ENCODE measurements at regions of chr7 and their contacts with region 1.

Region 1: GRCh38 chr7:36366718-36367560 is 22.7 kb upstream of the ANLN start:
- DNase-seq: peak; percentile 89 to 94 (median 91)
- H3K4me3 ChIP-seq: peak overlapping the region; percentile 90
- H3K4me3 Mint-ChIP-seq: peak overlapping the region; percentile 91 to 97 (median 94)
- H3K27ac ChIP-seq: peak overlapping the region; percentile 77
- H3K27ac Mint-ChIP-seq: peak overlapping the region in 7 of 8 donors; percentile 84 to 93 (median 88)
- H3K4me1 ChIP-seq: peaks cover 6% of the 10 kb centered on the region
- H3K4me1 Mint-ChIP-seq: peaks cover 0 to 8% (median 6%) of the 10 kb centered on the region in 3 donors
- H3K27me3 ChIP-seq: no peaks in the 10 kb centered on the region
- H3K27me3 Mint-ChIP-seq: peaks cover 13 to 19% of the 10 kb centered on the region in 2 donors

Region 2: DNA sequence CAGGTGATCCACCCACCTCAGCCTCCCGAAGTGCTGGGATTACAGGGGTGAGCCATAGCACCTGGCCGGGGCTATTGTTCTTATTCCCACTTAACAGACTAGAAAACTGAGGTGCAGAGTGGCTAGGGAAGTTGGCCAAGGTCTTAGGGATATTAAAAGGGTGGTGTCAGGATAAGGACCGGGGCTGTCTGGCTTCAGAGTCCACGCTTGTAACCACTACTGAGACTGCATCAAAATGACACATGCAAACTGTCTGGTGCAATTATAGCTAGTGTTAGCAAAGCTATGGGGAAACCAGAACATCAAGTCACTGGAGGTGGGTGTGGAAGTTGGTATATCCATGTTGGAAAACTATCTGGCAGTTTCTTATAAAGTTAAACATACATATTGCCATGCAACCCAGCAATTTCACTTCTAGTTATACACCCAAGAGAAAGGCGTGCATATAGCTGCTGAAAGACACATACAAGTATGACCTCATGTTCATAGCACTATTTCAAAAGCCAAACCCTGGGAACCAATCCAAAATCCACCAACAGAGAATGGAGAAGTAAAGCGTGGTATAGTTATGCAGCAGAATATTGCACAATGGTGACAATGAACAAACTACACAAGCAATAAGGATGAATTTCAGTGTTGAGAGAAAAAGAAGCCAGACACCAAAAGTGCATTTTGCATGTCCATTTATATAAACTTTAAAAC is 247.8 kb before region 1 on chr7:
- CTCF ChIA-PET with region 1: no interaction called
- POLR2A ChIA-PET with region 1: no interaction called
- DNase-seq: no peak
- H3K4me3 ChIP-seq: no peak overlapping the region
- H3K4me3 Mint-ChIP-seq: no peak overlapping the region
- H3K27ac ChIP-seq: no peak overlapping the region
- H3K27ac Mint-ChIP-seq: no peak overlapping the region
- H3K4me1 ChIP-seq: peaks cover 13% of the 10 kb centered on the region
- H3K4me1 Mint-ChIP-seq: peaks cover 18 to 44% (median 28%) of the 10 kb centered on the region in 3 donors
- H3K27me3 ChIP-seq: no peaks in the 10 kb centered on the region
- H3K27me3 Mint-ChIP-seq: peaks cover 15 to 34% of the 10 kb centered on the region in 2 donors

Region 3: GRCh38 chr7:36348256-36348655 is 18.7 kb before region 1 on chr7:
- CTCF ChIA-PET with region 1: interaction called, 12 read pairs
- POLR2A ChIA-PET with region 1: no interaction called
- DNase-seq: no peak
- H3K4me3 ChIP-seq: no peak overlapping the region
- H3K4me3 Mint-ChIP-seq: no peak overlapping the region
- H3K27ac ChIP-seq: no peak overlapping the region
- H3K27ac Mint-ChIP-seq: no peak overlapping the region
- H3K4me1 ChIP-seq: no peaks in the 10 kb centered on the region
- H3K4me1 Mint-ChIP-seq: no peaks in the 10 kb centered on the region
- H3K27me3 ChIP-seq: no peaks in the 10 kb centered on the region
- H3K27me3 Mint-ChIP-seq: peaks cover 0 to 4% of the 10 kb centered on the region in 2 donors

Region 4: DNA sequence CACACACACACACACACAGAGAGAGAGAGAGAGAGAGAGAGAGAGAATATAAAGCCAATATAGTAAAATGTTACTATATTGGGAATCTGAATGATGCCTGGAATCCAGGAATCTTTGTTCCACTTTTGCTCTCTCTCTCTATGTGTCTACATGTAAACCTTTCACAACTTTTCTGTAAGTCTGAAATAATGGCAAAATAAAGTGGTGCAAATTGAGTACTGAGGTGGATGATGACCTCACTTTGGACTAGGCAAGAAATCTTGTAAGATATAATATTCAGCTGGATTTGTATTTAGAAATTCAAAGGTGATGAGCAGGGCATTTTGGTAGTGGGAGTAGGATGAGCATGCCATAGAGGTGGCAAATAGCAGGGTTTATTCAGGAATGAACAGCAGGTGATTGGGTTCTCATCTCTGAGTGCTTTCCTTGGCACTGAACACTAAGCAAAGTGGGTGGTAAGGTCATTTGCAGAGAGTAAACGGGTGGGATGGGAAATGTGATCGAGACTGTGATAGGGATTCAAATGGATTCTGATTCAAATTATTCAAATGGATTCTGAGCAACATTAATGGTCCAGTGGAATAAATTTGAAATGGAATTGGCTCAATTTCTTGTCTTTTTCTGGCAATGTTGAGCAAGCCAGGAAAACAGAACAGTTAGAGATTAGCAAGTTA is 13.0 kb after region 1 on chr7:
- CTCF ChIA-PET with region 1: interaction called, 22 read pairs
- POLR2A ChIA-PET with region 1: interaction called, 11 read pairs
- DNase-seq: no peak
- H3K4me3 ChIP-seq: no peak overlapping the region
- H3K4me3 Mint-ChIP-seq: no peak overlapping the region
- H3K27ac ChIP-seq: no peak overlapping the region
- H3K27ac Mint-ChIP-seq: no peak overlapping the region
- H3K4me1 ChIP-seq: peaks cover 8% of the 10 kb centered on the region
- H3K4me1 Mint-ChIP-seq: peaks cover 14 to 30% (median 27%) of the 10 kb centered on the region in 3 donors
- H3K27me3 ChIP-seq: no peaks in the 10 kb centered on the region
- H3K27me3 Mint-ChIP-seq: peaks cover 6 to 15% of the 10 kb centered on the region in 2 donors

Region 5: GRCh38 chr7:36389371-36390198 is 22.6 kb after region 1 on chr7 and contains the start of gene ANLN:
- CTCF ChIA-PET with region 1: interaction called, 12 read pairs
- POLR2A ChIA-PET with region 1: interaction called, 7 read pairs
- DNase-seq: peak; percentile 81 to 87 (median 84)
- H3K4me3 ChIP-seq: peak within 1 kb of the TSS; percentile 94
- H3K4me3 Mint-ChIP-seq: peak within 1 kb of the TSS; percentile 75 to 93 (median 85)
- H3K27ac ChIP-seq: peak within 1 kb of the TSS; percentile 62
- H3K27ac Mint-ChIP-seq: peak within 1 kb of the TSS; percentile 55 to 91 (median 87)
- H3K4me1 ChIP-seq: peaks cover 19% of the 10 kb centered on the region
- H3K4me1 Mint-ChIP-seq: peaks cover 24 to 33% (median 32%) of the 10 kb centered on the region in 3 donors
- H3K27me3 ChIP-seq: no peaks in the 10 kb centered on the region
- H3K27me3 Mint-ChIP-seq: no peaks in the 10 kb centered on the region
- total RNA-seq, gene ANLN: 29.1 to 31.0 TPM

Region 6: GRCh38 chr7:36456138-36456537 is 89.2 kb after region 1 on chr7:
- CTCF ChIA-PET with region 1: no interaction called
- POLR2A ChIA-PET with region 1: interaction called, 13 read pairs
- DNase-seq: no peak
- H3K4me3 ChIP-seq: no peak overlapping the region
- H3K4me3 Mint-ChIP-seq: no peak overlapping the region
- H3K27ac ChIP-seq: no peak overlapping the region
- H3K27ac Mint-ChIP-seq: no peak overlapping the region
- H3K4me1 ChIP-seq: no peaks in the 10 kb centered on the region
- H3K4me1 Mint-ChIP-seq: no peaks in the 10 kb centered on the region
- H3K27me3 ChIP-seq: no peaks in the 10 kb centered on the region
- H3K27me3 Mint-ChIP-seq: no peaks in the 10 kb centered on the region